ENCODE measurements at regions of chr22 and their contacts with region 1.

Region 1: GRCh38 chr22:32444068-32444467 is 20.2 kb downstream of the BPIFC start:
- DNase-seq: peak; percentile 25
- H3K4me3 ChIP-seq: no peak overlapping the region
- H3K27ac ChIP-seq: no peak overlapping the region
- H3K4me1 ChIP-seq: no peaks in the 10 kb centered on the region
- H3K27me3 ChIP-seq: no peaks in the 10 kb centered on the region
- CTCF ChIP-seq: peak; percentile 36 to 70

Region 2: GRCh38 chr22:32378707-32379272 is 65.3 kb before region 1 on chr22:
- CTCF ChIA-PET with region 1: no interaction called
- dilution Hi-C with region 1: no loop called
- in situ Hi-C with region 1: no loop called
- intact Hi-C with region 1: loop called (anchors 2 kb)
- DNase-seq: peak; percentile 31
- H3K4me3 ChIP-seq: no peak overlapping the region
- H3K27ac ChIP-seq: no peak overlapping the region
- H3K4me1 ChIP-seq: no peaks in the 10 kb centered on the region
- H3K27me3 ChIP-seq: no peaks in the 10 kb centered on the region
- CTCF ChIP-seq: peak; percentile 75 to 86

Region 3: DNA sequence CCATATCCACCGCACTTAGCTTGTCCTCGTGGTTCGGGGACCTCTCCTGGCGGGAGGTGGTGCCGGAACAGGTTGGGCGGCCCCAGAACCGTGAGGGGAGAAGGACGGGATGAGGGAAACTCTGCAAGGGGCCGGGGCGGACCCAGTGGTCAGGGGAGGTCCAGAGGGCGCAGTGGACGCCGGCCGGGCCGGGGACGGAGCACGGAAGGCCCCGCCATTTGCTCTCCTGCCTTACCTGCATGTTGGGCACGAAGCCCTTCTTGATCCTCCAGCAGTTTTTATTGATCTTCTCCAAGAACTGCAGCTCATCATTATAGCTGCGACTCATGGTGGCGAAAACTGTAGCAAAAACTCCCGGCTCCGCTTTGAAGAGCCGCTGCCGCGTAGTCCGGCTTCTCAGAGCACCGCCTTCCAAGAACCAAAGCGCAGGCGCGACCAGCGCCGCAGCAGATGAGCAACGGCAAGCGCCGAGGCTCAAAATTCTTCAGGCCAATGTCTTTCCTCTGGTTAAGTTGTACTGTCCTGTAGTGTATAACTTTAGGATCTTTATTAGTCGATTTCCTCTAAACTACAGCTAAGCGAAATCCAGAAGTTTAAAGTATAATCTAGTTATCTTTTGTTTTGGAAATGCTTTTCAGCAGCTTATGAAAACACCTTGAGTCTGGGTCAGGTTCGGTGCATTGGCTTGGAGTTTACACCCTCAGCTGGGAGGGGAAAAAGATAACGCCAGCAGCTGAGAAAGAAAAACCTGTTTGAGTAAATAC is 32.1 kb before region 1 on chr22 and contains the start of gene RTCB:
- CTCF ChIA-PET with region 1: no interaction called
- dilution Hi-C with region 1: no loop called
- in situ Hi-C with region 1: no loop called
- intact Hi-C with region 1: loop called (anchors 1 kb)
- DNase-seq: peak; percentile 91
- H3K4me3 ChIP-seq: peak within 1 kb of the TSS; percentile 83 to 94 (median 86)
- H3K27ac ChIP-seq: peak within 1 kb of the TSS; percentile 80
- H3K4me1 ChIP-seq: peaks cover 25% of the 10 kb centered on the region
- H3K27me3 ChIP-seq: no peaks in the 10 kb centered on the region
- CTCF ChIP-seq: no peak
- total RNA-seq, gene RTCB: 75.8 to 84.7 TPM

Region 4: DNA sequence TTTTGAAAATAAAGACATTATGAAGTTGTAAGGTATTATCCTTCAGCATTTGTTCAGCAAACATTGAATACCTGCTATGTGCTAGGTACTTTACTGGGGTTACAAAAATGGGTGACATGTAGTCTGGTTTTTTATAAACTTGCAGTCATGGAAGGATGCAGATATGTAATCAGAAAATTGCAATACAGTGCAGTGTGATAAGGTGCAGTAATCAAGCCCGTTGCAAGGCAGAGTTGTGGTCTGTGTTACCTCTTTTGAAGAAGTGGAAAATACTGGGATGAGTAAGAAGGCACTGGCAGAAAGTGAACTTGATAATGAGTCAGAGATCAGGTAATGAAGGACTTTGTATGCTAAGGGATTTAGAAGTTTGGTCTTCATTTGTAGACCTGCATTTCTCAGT is 38.6 kb after region 1 on chr22:
- CTCF ChIA-PET with region 1: no interaction called
- dilution Hi-C with region 1: no loop called
- in situ Hi-C with region 1: no loop called
- intact Hi-C with region 1: no loop called
- DNase-seq: peak; percentile 69
- H3K4me3 ChIP-seq: no peak overlapping the region
- H3K27ac ChIP-seq: no peak overlapping the region
- H3K4me1 ChIP-seq: peaks cover 12% of the 10 kb centered on the region
- H3K27me3 ChIP-seq: no peaks in the 10 kb centered on the region
- CTCF ChIP-seq: no peak

Measured in mammary epithelial cell (primary cell).